Naive thymus-derived CD4-positive, alpha-beta T cell (primary cell): ENCODE measurements at regions of chr2 and their contacts with region 1.

Region 1: GRCh38 chr2:237691908-237692600 is 64.7 kb downstream of the LRRFIP1 start:
- DNase-seq: peak; percentile 84 to 97 (median 90)
- ATAC-seq: peak; percentile 75
- H3K4me3 ChIP-seq: peak overlapping the region; percentile 82
- H3K4me3 Mint-ChIP-seq: peak overlapping the region; percentile 86 to 98 (median 92)
- H3K27ac ChIP-seq: peak overlapping the region; percentile 97
- H3K27ac Mint-ChIP-seq: peak overlapping the region; percentile 89 to 98 (median 94)
- H3K4me1 ChIP-seq: peaks cover 61 to 63% of the 10 kb centered on the region in 2 donors
- H3K4me1 Mint-ChIP-seq: peaks cover 59 to 86% (median 74%) of the 10 kb centered on the region in 7 donors
- H3K27me3 ChIP-seq: no peaks in the 10 kb centered on the region
- H3K27me3 Mint-ChIP-seq: no peaks in the 10 kb centered on the region

Region 2: DNA sequence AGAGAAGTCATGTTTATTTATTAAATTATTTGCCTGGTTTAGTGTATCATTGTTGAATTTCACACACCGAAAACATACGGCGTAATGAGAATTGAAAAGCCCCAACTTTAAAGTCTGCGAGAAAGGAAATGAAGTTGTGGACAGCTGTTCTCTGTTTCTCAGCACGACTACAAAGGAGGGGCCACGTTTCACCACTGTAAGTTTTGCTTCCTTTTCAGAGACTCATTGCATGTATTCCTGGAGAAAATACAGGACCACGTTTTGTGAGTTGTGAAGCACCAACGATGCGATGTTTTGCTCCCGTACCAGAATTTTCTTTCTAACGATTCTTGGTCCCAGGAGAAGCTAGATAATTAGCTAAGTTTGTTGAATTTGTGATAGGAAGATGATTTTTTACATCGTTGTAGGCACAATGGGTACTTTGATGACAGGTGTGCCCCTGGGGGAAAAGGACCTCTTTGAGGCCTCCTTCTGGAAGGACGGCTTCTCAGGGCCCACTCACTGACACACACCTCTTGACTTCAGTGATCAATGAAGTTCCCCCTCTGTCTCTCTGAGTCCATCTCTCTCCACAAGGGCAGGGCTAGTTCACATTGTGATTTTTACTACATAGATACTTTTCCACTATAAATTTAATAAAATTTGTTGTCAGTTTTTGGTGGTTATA is 1146.1 kb before region 1 on chr2:
- CTCF ChIA-PET with region 1: no interaction called
- POLR2A ChIA-PET with region 1: no interaction called
- intact Hi-C with region 1: loop called in 1 of 2 experiments (anchors 10 kb)
- DNase-seq: peak in 3 of 9 donors; percentile 23 to 36 (median 32)
- ATAC-seq: peak; percentile 74
- H3K4me3 ChIP-seq: peak overlapping the region; percentile 34
- H3K4me3 Mint-ChIP-seq: peak overlapping the region; percentile 49 to 85 (median 68)
- H3K27ac ChIP-seq: peak overlapping the region; percentile 72
- H3K27ac Mint-ChIP-seq: peak overlapping the region; percentile 77 to 96 (median 92)
- H3K4me1 ChIP-seq: peaks cover 60% of the 10 kb centered on the region in 2 donors
- H3K4me1 Mint-ChIP-seq: peaks cover 71 to 97% (median 95%) of the 10 kb centered on the region in 7 donors
- H3K27me3 ChIP-seq: no peaks in the 10 kb centered on the region
- H3K27me3 Mint-ChIP-seq: no peaks in the 10 kb centered on the region

Region 3: DNA sequence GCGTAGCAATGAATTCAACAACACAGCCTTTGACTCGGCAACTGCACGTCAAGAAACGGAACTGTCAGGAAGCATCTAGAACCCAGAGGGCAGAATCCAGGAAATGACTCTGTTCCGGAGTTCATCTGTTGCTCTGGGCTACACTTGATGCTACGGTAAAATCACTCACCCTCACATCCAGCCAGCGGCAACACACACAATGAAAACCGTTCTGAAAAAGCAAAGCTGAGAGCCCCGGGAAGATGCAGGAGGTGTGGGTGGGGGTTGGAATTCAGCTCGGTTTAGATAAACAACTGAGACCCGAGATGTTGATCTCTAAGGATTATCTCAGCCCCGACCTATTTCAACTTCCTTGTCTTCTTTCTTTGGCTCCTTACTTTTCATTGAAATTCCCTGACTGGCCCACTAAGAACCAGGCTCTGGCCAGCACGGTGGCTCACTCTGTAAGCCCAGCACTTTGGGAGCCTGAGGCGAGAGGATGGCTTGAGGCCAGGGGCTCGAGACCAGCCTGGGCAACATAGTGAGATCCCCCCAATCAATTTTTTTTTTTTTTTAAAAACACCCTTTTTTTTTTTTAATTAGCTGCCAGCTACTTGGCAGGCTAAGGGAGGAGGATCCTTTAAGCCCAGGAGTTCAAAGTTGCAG is 88.2 kb before region 1 on chr2:
- CTCF ChIA-PET with region 1: no interaction called
- POLR2A ChIA-PET with region 1: interaction called, 3 read pairs
- intact Hi-C with region 1: loop called (anchors 1 to 5 kb)
- DNase-seq: peak; percentile 39 to 91 (median 84)
- ATAC-seq: peak; percentile 98
- H3K4me3 ChIP-seq: peak overlapping the region; percentile 38
- H3K4me3 Mint-ChIP-seq: peak overlapping the region; percentile 64 to 85 (median 73)
- H3K27ac ChIP-seq: peak overlapping the region; percentile 88
- H3K27ac Mint-ChIP-seq: peak overlapping the region; percentile 93 to 99 (median 97)
- H3K4me1 ChIP-seq: peaks cover 8 to 23% of the 10 kb centered on the region in 2 donors
- H3K4me1 Mint-ChIP-seq: peaks cover 18 to 42% (median 37%) of the 10 kb centered on the region in 7 donors
- H3K27me3 ChIP-seq: no peaks in the 10 kb centered on the region
- H3K27me3 Mint-ChIP-seq: peaks cover 0 to 11% (median 0%) of the 10 kb centered on the region in 5 donors

Region 4: DNA sequence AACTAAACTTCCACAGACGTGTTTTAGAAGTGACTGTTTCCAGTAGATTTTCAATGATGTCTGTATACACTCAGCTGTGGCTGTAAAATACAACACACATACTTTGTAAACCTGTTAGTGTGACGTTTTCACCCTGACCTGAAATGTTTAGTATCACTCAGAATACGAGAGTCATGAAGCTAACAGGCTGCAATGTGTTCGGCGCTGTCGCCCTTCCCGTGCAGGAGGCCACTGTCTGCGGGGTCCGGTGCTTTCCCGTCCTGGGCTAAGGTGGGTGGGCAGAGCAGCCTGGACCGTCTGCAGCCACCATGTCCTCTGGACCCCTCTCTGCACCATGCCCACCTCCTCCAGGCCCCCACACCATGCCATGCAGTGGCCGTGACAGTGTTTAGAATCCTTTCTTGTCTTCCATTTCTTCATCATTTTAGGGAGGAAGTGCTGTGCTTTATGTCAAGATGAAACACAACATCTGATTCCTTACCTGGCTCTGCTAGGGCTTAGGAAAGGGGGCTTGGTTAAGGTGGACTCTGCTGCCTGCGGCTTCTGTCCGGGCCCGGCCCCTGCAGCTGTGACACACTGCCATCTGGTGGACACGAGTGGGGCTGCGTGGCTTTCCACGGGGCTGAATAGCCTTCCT is 52.7 kb after region 1 on chr2:
- CTCF ChIA-PET with region 1: interaction called, 43 read pairs
- POLR2A ChIA-PET with region 1: interaction called, 8 read pairs
- intact Hi-C with region 1: loop called (anchors 1 to 2 kb)
- DNase-seq: peak; percentile 61 to 84 (median 74)
- ATAC-seq: peak; percentile 83
- H3K4me3 ChIP-seq: no peak overlapping the region
- H3K4me3 Mint-ChIP-seq: peak overlapping the region in 1 of 10 donors; percentile 14
- H3K27ac ChIP-seq: peak overlapping the region; percentile 44
- H3K27ac Mint-ChIP-seq: peak overlapping the region; percentile 79 to 94 (median 86)
- H3K4me1 ChIP-seq: peaks cover 4 to 8% of the 10 kb centered on the region in 2 donors
- H3K4me1 Mint-ChIP-seq: peaks cover 30 to 55% (median 46%) of the 10 kb centered on the region in 7 donors
- H3K27me3 ChIP-seq: no peaks in the 10 kb centered on the region
- H3K27me3 Mint-ChIP-seq: no peaks in the 10 kb centered on the region

Region 5: GRCh38 chr2:238203094-238203972 is 511.3 kb after region 1 on chr2 and contains the start of gene ILKAP:
- CTCF ChIA-PET with region 1: no interaction called
- POLR2A ChIA-PET with region 1: interaction called, 3 read pairs
- intact Hi-C with region 1: loop called in 1 of 2 experiments (anchors 5 kb)
- DNase-seq: peak; percentile 87 to 95 (median 92)
- ATAC-seq: peak; percentile 98
- H3K4me3 ChIP-seq: peak within 1 kb of the TSS; percentile 67
- H3K4me3 Mint-ChIP-seq: peak within 1 kb of the TSS; percentile 84 to 94 (median 88)
- H3K27ac ChIP-seq: peak within 1 kb of the TSS; percentile 91
- H3K27ac Mint-ChIP-seq: peak within 1 kb of the TSS; percentile 84 to 95 (median 92)
- H3K4me1 ChIP-seq: peaks cover 20 to 35% of the 10 kb centered on the region in 2 donors
- H3K4me1 Mint-ChIP-seq: peaks cover 28 to 55% (median 43%) of the 10 kb centered on the region in 7 donors
- H3K27me3 ChIP-seq: no peaks in the 10 kb centered on the region
- H3K27me3 Mint-ChIP-seq: peaks cover 0 to 4% (median 0%) of the 10 kb centered on the region in 5 donors
- total RNA-seq, gene ILKAP: 68.1 to 126 (median 90.9) TPM